Psoas muscle (tissue), 8 donors: ENCODE measurements at regions of chr20 and their contacts with region 1.

Region 1: DNA sequence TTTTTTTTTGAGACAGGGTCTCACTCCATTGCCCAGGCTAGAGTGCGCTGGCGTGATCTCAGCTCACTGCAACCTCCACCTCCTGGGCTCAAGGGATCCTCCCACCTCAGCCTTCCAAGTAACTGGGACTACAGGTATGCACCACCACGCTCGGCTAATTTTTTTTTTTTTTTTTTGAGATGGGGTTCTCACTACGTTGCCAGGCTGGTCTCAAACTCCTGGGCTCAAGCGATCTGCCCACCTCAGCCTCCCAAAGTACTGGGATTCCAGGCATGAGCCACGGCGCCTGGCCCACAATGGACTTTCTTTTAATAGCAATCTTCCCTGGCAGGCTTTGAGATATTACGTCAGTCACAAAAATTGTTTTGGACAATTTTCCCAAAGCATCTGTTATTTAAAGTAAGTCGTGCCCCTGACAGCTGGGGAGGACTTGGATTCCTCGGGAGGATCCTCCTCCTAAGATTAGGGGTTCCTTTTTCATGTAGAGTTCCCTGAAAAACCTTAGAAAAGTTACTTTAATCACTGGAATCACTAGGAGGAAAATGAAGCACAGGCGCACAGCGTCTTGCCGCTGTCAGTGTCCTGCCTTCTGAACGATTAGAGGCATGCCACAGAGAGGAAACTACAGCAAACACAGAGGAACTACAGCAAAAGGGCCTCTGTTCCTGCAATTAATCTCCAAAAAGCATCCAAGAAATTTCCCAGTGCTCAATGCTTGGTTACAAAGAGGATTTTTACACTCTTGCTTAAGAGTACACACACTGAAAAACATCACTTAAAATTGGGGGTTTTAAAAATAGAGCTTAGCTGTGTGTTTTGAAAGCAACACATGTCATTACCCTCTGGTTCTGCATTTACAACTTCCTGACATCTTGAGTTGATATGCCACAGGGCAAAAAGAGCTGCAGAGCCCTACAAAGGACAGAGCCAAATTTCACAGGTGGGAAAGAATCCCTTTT is 4.6 kb downstream of the ACSS1 start:
- DNase-seq: peak; percentile 63 to 80
- ATAC-seq: peak in 3 of 4 donors; percentile 43 to 52 (median 45)
- H3K4me3 ChIP-seq: peak overlapping the region; percentile 5
- H3K27ac ChIP-seq: peak overlapping the region; percentile 83
- H3K4me1 ChIP-seq: peaks cover 86% of the 10 kb centered on the region
- H3K27me3 ChIP-seq: no peaks in the 10 kb centered on the region
- CTCF ChIP-seq: no peak

Region 2: DNA sequence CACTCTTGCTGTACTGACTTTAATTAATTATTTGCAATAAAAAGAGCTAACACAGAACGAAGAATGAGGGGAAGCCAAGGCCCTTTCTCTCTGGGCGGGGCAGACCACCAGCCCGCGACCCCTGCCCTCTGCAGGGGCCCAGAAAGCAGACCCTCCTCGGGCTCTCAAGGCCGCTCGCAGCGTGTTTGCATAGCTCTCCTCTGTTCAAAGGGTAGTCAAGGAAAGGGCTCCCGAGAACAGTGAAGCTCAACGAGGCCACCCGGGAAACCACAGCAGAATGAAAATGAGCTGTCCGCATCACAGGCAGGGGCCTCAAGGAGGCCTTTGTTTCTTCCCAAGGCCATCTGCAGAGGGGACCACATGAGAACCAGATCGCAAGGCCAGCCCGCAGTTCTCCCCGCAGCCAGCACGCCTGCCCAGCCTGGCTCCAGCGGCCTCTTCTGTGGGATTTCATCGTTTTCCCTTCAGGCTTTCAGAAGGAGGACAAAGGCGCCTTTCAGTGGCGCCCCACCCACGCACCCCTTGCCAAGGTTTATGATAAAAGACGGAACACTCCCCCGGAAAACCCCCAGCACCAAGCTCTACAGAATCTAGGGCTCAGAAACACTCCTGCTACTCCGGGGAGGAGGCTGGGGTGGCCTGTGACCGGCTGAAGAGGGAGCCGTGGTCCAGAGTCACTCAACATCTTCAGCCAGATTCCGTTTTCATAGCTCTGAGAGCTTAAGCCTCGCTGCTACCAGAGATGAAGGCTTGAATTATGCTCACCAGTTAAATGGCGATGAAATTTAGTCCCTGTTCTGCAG is 20.7 kb before region 1 on chr20:
- intact Hi-C with region 1: loop called in 1 of 2 experiments (anchors 2 kb)
- DNase-seq: peak in 1 of 2 donors; percentile 31
- ATAC-seq: peak; percentile 37 to 57 (median 45)
- H3K4me3 ChIP-seq: no peak overlapping the region
- H3K27ac ChIP-seq: peak overlapping the region; percentile 54
- H3K4me1 ChIP-seq: peaks cover 49% of the 10 kb centered on the region
- H3K27me3 ChIP-seq: no peaks in the 10 kb centered on the region
- CTCF ChIP-seq: no peak